Activated CD8-positive, alpha-beta memory T cell treated with anti-CD3 and anti-CD28 coated beads, Interleukin-2, amount 10 ng/mL, durations not matched to agents 7 days and 5 days (primary cell): ENCODE measurements at regions of chr10 and their contacts with region 1.

Region 1: GRCh38 chr10:99394256-99394655 is 36.2 kb downstream of the GOT1 start:
- DNase-seq: no peak
- ATAC-seq: no peak
- H3K4me3 Mint-ChIP-seq: no peak overlapping the region
- H3K27ac Mint-ChIP-seq: no peak overlapping the region
- H3K4me1 Mint-ChIP-seq: peaks cover 6% of the 10 kb centered on the region
- H3K27me3 Mint-ChIP-seq: no peaks in the 10 kb centered on the region

Region 2: GRCh38 chr10:99353182-99353581 is 41.1 kb before region 1 on chr10:
- CTCF ChIA-PET with region 1: no interaction called
- DNase-seq: no peak
- ATAC-seq: no peak
- H3K4me3 Mint-ChIP-seq: no peak overlapping the region
- H3K27ac Mint-ChIP-seq: no peak overlapping the region
- H3K4me1 Mint-ChIP-seq: no peaks in the 10 kb centered on the region
- H3K27me3 Mint-ChIP-seq: peaks cover 26% of the 10 kb centered on the region

Region 3: GRCh38 chr10:99382181-99382580 is 12.1 kb before region 1 on chr10:
- CTCF ChIA-PET with region 1: no interaction called
- DNase-seq: no peak
- ATAC-seq: no peak
- H3K4me3 Mint-ChIP-seq: no peak overlapping the region
- H3K27ac Mint-ChIP-seq: no peak overlapping the region
- H3K4me1 Mint-ChIP-seq: peaks cover 1% of the 10 kb centered on the region
- H3K27me3 Mint-ChIP-seq: peaks cover 21% of the 10 kb centered on the region

Region 4: GRCh38 chr10:99421233-99421739 is 27.0 kb after region 1 on chr10:
- CTCF ChIA-PET with region 1: no interaction called
- DNase-seq: no peak
- ATAC-seq: no peak
- H3K4me3 Mint-ChIP-seq: no peak overlapping the region
- H3K27ac Mint-ChIP-seq: no peak overlapping the region
- H3K4me1 Mint-ChIP-seq: no peaks in the 10 kb centered on the region
- H3K27me3 Mint-ChIP-seq: no peaks in the 10 kb centered on the region

Region 5: GRCh38 chr10:99435986-99436638 is 41.9 kb after region 1 on chr10:
- CTCF ChIA-PET with region 1: interaction called, 18 read pairs
- DNase-seq: no peak
- ATAC-seq: no peak
- H3K4me3 Mint-ChIP-seq: no peak overlapping the region
- H3K27ac Mint-ChIP-seq: no peak overlapping the region
- H3K4me1 Mint-ChIP-seq: peaks cover 13% of the 10 kb centered on the region
- H3K27me3 Mint-ChIP-seq: no peaks in the 10 kb centered on the region